Activated CD4-positive, alpha-beta T cell treated with anti-CD3 and anti-CD28 coated beads for 36 hours (primary cell): ENCODE measurements at regions of chr9 and their contacts with region 1.

Region 1: DNA sequence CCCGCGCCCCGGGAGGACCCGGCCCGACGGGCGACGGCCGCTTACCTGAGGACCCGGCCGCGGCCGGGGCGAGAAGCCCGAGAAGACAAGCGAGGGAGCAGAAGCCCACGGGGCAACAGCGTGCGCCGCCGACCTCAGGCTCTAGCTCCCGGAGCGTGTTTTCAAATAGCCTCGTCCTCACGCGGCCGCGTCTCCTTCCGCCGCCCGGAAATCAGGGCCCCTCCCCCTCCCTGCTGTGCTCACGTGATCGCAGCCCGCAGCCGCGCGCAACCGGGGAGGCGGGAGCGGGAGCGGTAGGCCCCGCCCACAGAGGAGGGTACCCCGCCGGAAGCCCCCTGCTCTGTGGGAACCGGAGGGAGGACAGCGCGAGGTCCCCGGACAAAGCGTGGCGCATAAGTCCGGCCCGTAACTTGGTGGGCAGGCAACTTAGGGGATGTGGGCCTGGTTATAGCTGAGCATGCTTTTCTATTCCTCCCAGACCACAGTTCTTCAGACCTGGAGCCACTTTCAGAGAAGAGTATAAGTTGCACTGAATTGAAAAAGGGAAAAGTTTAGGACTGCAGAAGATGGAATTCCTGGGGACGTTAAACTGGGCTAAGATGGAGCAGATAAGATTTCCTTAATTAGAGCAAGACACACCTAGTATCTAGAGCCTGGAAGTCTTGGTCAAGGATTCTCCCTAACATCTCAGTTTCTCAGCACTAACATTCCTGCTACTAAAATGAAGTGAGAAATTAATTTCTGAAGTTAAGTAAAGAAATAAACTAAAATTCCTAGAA is at the start of gene TEX10:
- DNase-seq: peak; percentile 93
- ATAC-seq: peak; percentile 93
- H3K4me3 Mint-ChIP-seq: peak within 1 kb of the TSS; percentile 95
- H3K27ac Mint-ChIP-seq: peak within 1 kb of the TSS; percentile 91
- H3K4me1 Mint-ChIP-seq: peaks cover 41% of the 10 kb centered on the region
- H3K27me3 Mint-ChIP-seq: no peaks in the 10 kb centered on the region
- total RNA-seq, gene TEX10: 24.8 to 27.5 TPM

Region 2: DNA sequence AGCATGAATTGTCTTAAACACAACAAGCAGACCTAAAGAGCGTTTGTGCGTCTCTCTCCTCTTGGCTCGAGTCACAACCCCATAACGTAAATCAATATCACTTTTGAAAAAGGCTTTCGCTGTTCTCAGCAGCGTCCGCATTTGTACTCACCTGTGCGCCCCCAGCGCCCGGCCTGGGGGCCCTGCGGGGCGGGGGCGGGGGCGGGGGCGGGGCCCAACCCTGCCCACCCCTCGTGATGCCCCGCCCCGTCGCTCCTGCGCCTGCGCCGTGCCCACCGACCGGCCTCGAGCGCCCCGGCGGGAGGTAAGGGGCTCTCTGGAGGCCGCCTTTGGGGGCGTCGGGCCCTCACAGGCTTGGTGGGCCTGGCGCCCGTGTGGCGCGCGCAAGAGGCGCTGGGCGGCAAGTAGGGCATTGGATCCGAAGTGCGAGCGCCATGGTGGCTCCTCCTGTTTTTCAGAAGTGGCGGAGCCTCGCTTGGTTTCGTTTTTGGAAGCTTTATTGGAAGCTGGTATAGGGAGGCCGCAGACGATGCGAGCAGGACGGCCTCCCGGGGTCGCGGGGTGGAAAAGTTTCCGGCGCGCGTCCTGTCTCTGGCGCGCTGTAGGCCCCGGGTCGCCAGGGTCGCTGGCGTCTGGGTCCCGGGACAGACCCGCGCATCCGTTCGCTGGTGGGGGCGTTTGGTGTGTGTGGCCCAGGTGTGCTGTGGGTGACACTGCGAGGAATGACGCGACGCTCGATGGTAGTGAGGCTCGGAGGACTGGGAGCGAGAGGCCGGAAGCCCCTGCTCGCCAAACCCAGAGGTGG is 446.3 kb before region 1 on chr9 and contains the start of gene STX17:
- CTCF ChIA-PET with region 1: no interaction called
- POLR2A ChIA-PET with region 1: no interaction called
- intact Hi-C with region 1: loop called in 1 of 2 experiments (anchors 2 kb)
- DNase-seq: peak; percentile 85
- ATAC-seq: peak; percentile 92
- H3K4me3 Mint-ChIP-seq: peak within 1 kb of the TSS; percentile 97
- H3K27ac Mint-ChIP-seq: peak within 1 kb of the TSS; percentile 96
- H3K4me1 Mint-ChIP-seq: peaks cover 26% of the 10 kb centered on the region
- H3K27me3 Mint-ChIP-seq: peaks cover 2% of the 10 kb centered on the region
- total RNA-seq, gene STX17: 32.8 to 35.2 TPM

Region 3: GRCh38 chr9:100322954-100323536 is 29.9 kb before region 1 on chr9:
- CTCF ChIA-PET with region 1: interaction called, 10 read pairs
- POLR2A ChIA-PET with region 1: no interaction called
- intact Hi-C with region 1: no loop called
- DNase-seq: peak; percentile 49
- ATAC-seq: no peak
- H3K4me3 Mint-ChIP-seq: no peak overlapping the region
- H3K27ac Mint-ChIP-seq: no peak overlapping the region
- H3K4me1 Mint-ChIP-seq: peaks cover 13% of the 10 kb centered on the region
- H3K27me3 Mint-ChIP-seq: no peaks in the 10 kb centered on the region

Region 4: GRCh38 chr9:100379862-100380261 is 26.9 kb after region 1 on chr9:
- CTCF ChIA-PET with region 1: no interaction called
- POLR2A ChIA-PET with region 1: no interaction called
- intact Hi-C with region 1: no loop called
- DNase-seq: no peak
- ATAC-seq: no peak
- H3K4me3 Mint-ChIP-seq: no peak overlapping the region
- H3K27ac Mint-ChIP-seq: no peak overlapping the region
- H3K4me1 Mint-ChIP-seq: no peaks in the 10 kb centered on the region
- H3K27me3 Mint-ChIP-seq: no peaks in the 10 kb centered on the region

Region 5: GRCh38 chr9:100426530-100427428 is 73.9 kb after region 1 on chr9 and contains the start of gene MSANTD3:
- CTCF ChIA-PET with region 1: no interaction called
- POLR2A ChIA-PET with region 1: no interaction called
- intact Hi-C with region 1: loop called (anchors 2 to 5 kb)
- DNase-seq: peak; percentile 71
- ATAC-seq: peak; percentile 74
- H3K4me3 Mint-ChIP-seq: peak within 1 kb of the TSS; percentile 81
- H3K27ac Mint-ChIP-seq: peak within 1 kb of the TSS; percentile 91
- H3K4me1 Mint-ChIP-seq: peaks cover 30% of the 10 kb centered on the region
- H3K27me3 Mint-ChIP-seq: no peaks in the 10 kb centered on the region
- total RNA-seq, gene MSANTD3: 17.9 to 21.6 TPM

Region 6: DNA sequence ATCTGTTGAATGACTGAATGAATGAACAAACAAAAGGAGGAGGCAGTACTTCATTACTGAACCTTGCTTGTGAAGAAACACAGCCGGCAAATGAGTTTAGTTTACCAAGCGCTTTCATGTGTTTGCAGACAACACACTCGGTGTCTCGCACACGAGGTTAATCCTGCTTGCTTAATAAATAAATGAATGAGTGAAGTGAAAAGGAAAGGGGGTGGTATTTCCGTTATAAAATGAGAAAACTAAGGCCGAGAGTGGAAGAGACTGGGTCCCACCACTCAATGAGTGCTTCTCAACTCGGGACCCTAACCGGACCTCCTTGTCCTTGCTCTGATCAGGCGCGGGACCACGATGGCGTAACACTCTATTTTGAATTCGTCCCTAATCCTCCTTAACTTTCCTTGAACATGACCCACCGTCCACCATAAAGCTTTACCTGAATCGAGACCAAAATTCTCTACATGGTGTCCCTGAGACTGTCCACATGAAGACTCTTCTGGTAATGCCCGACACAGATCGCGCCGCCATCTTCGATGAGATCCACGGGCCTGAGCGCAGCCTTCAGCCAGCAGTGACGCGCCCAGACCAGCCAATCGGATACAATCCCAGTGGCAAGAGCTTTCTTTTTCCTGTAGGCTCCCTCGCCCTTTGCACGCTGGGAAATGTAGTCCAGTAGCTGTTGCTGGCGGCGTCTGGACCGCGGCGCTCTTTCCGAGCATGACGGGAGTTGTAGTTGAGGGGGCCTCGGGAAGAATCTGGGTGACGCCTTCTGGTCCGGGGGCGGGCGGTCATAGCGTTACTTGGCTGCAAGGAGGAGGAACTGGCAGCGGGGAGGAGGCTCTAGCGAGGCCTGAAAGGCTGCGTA is 1045.4 kb after region 1 on chr9 and contains the starts of genes MRPL50 and ZNF189:
- CTCF ChIA-PET with region 1: no interaction called
- POLR2A ChIA-PET with region 1: no interaction called
- intact Hi-C with region 1: loop called in 1 of 2 experiments (anchors 5 kb)
- DNase-seq: peak; percentile 98
- ATAC-seq: peak; percentile 97
- H3K4me3 Mint-ChIP-seq: peak within 1 kb of the TSS; percentile 94
- H3K27ac Mint-ChIP-seq: peak within 1 kb of the TSS; percentile 100
- H3K4me1 Mint-ChIP-seq: peaks cover 67% of the 10 kb centered on the region
- H3K27me3 Mint-ChIP-seq: no peaks in the 10 kb centered on the region
- total RNA-seq, gene MRPL50: 15.5 to 17.0 TPM
- total RNA-seq, gene ZNF189: 10.2 to 13.1 TPM